Activated CD8-positive, alpha-beta T cell treated with anti-CD3 and anti-CD28 coated beads, Interleukin-2, amount 10 ng/mL, durations not matched to agents 7 days and 5 days (primary cell): ENCODE measurements at regions of chr22 and their contacts with region 1.

Region 1: DNA sequence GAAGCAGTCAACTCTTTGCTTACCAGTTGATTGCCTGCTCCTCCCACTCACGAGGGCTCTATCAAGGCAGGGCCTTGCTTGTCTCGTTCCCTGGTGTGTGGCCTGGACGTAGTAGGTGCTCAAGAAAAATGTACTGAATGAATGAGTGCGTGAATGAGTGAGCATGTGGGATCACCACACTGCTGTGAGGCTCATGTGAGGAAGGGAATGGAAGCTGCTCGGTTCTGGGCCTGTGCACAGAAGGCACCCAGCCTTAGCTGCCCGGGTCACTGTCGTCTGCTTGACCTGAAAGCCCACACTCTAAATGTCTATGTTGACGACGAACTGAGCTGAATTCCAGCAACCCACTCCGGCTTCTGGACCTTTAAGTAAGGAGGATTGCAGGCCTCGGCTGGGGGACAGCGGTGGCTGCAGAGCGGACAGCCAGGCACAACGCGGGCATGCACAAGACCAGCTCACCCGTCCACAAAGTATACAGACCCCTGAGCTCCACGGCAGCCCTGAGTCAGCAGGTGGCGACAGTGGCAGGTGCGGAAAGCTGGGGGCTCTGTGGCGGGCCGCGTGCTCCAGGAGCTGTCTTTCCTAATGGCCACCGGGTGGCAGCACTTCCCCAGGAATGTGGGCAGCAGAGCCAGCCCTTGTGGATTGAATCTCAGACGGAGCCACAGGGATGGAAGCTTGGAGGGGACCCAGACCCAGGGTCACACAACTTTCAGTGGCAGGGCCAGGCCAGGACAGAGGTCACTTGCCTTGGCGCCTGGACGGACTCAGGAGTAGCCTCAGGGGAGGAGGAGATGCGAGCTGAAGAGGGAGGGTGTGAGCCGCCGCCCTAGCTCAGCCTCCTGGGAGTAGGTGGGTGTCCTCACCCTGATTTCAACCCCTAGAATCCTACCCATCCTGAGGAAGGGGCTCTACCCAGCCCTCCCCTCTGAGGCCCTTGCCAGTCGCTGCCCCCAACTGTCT is 5.0 kb upstream of the PICK1 start:
- DNase-seq: peak; percentile 87
- ATAC-seq: peak; percentile 80
- H3K4me3 Mint-ChIP-seq: no peak overlapping the region
- H3K27ac Mint-ChIP-seq: no peak overlapping the region
- H3K4me1 Mint-ChIP-seq: peaks cover 18% of the 10 kb centered on the region
- H3K27me3 Mint-ChIP-seq: peaks cover 7% of the 10 kb centered on the region

Region 2: DNA sequence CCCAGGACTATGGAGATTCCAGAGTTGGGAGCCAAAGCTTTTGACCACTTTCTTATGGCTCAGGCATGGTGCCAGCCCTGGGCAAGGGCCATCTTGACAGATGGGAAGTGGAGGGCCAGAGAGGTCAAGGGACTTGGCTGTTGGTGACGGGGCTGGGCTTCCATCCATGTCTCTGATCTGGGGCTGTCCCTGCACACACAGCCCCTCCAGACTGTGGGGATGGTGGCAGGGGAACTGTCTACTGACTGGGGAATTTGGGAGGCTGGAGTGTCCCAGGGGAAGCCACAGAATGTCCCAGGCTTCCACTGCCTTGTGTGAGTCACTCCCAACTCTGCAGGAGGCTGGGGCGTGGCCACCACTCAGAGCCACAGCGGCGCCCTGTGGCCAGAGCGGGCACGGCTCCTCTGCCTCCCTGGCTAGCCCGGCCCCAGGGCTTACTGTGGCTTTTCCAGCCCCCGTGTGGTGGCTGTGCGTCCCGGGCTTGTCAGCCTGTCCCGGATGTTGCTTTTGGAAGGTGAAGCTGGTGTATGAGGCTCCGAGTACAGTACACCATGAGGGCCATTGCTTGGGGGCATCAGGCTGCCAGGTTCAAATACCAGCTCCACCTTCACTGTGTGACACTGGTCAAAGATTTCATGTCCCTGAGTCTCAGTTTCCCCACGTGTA is 118.3 kb before region 1 on chr22:
- CTCF ChIA-PET with region 1: no interaction called
- POLR2A ChIA-PET with region 1: no interaction called
- DNase-seq: peak; percentile 90
- ATAC-seq: peak; percentile 99
- H3K4me3 Mint-ChIP-seq: no peak overlapping the region
- H3K27ac Mint-ChIP-seq: no peak overlapping the region
- H3K4me1 Mint-ChIP-seq: peaks cover 15% of the 10 kb centered on the region
- H3K27me3 Mint-ChIP-seq: no peaks in the 10 kb centered on the region

Region 3: GRCh38 chr22:38069372-38070249 is 17.4 kb after region 1 on chr22:
- CTCF ChIA-PET with region 1: interaction called, 16 read pairs
- POLR2A ChIA-PET with region 1: interaction called, 4 read pairs
- DNase-seq: no peak
- ATAC-seq: no peak
- H3K4me3 Mint-ChIP-seq: no peak overlapping the region
- H3K27ac Mint-ChIP-seq: no peak overlapping the region
- H3K4me1 Mint-ChIP-seq: no peaks in the 10 kb centered on the region
- H3K27me3 Mint-ChIP-seq: no peaks in the 10 kb centered on the region

Region 4: GRCh38 chr22:38126928-38127668 is 74.9 kb after region 1 on chr22:
- CTCF ChIA-PET with region 1: no interaction called
- POLR2A ChIA-PET with region 1: no interaction called
- DNase-seq: no peak
- ATAC-seq: no peak
- H3K4me3 Mint-ChIP-seq: no peak overlapping the region
- H3K27ac Mint-ChIP-seq: no peak overlapping the region
- H3K4me1 Mint-ChIP-seq: peaks cover 15% of the 10 kb centered on the region
- H3K27me3 Mint-ChIP-seq: no peaks in the 10 kb centered on the region

Region 5: DNA sequence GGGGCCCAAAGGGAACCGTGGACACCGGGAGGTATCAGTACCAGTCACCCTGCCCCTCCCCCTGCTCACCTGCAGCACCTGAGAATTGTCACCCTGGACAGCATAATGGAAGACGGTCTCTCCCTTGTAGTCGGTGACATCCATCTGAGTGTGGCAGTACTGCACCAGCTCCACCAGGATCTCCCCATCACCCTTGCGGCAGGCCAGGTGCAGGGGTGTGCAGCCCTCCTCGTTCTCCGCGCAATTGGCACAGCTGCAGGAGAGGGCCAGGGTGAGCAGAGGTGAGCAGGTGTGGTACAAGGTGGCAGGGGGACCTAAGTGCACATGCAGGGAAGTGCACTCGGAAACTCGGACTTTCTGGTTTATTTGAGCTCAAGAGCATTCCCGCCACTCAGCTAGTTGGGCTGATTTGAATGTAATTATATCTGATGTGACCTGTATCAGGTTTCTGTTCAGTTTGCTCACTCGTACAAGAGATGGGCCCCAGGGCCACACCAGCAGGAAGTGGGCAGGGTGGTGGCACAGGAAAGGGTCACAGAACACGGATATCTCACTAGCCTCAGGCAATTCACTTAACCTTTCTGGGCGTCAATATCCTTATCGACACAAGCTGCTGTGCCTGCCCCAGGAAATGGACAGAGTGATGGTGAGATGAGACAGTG is 91.0 kb after region 1 on chr22:
- CTCF ChIA-PET with region 1: interaction called, 12 read pairs
- POLR2A ChIA-PET with region 1: no interaction called
- DNase-seq: peak; percentile 71
- ATAC-seq: peak; percentile 66
- H3K4me3 Mint-ChIP-seq: peak overlapping the region; percentile 51
- H3K27ac Mint-ChIP-seq: peak overlapping the region; percentile 95
- H3K4me1 Mint-ChIP-seq: peaks cover 36% of the 10 kb centered on the region
- H3K27me3 Mint-ChIP-seq: no peaks in the 10 kb centered on the region

Region 6: DNA sequence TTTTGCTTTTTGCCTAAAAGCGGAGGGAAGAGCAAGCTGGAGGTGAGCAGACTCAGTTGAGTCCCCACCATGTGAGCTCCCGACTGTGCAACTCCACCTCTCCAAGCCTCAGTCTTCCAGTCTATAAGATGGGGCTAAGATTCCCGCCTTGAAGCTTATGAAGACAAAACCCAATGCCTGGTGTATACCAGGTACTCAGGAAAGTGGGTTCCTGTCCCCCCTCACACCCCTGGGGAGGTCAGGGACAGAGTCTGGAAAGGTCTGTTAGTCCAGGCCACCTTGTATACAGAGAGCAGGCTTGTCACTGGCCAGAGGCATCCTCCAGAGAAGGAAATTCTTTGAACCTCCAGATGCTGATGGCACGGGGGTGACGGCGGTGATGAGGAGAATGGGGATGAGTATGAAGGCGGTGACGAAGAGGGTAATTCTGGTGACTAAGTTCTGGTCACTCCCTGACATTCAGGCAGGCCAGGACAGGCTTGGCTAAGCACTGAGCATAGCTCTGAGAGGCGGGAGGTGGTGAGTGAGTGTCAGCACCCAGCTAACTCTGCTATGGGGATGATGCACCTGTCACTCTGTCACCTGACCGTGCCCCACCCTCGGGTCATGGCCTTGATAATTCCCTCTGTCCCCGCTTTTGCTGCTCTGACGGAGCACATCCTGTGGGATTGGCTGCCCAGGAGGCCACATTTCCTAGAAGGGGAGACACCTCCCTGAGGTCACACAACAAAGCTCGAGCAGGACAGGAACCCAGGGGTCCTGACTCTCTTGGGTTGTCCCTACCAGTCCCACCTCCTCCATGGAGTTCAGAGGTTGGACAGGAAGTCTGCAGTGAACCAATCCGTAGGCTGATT is 295.9 kb after region 1 on chr22:
- CTCF ChIA-PET with region 1: interaction called, 24 read pairs
- POLR2A ChIA-PET with region 1: no interaction called
- DNase-seq: peak; percentile 15
- ATAC-seq: no peak
- H3K4me3 Mint-ChIP-seq: no peak overlapping the region
- H3K27ac Mint-ChIP-seq: no peak overlapping the region
- H3K4me1 Mint-ChIP-seq: no peaks in the 10 kb centered on the region
- H3K27me3 Mint-ChIP-seq: no peaks in the 10 kb centered on the region

Region 7: DNA sequence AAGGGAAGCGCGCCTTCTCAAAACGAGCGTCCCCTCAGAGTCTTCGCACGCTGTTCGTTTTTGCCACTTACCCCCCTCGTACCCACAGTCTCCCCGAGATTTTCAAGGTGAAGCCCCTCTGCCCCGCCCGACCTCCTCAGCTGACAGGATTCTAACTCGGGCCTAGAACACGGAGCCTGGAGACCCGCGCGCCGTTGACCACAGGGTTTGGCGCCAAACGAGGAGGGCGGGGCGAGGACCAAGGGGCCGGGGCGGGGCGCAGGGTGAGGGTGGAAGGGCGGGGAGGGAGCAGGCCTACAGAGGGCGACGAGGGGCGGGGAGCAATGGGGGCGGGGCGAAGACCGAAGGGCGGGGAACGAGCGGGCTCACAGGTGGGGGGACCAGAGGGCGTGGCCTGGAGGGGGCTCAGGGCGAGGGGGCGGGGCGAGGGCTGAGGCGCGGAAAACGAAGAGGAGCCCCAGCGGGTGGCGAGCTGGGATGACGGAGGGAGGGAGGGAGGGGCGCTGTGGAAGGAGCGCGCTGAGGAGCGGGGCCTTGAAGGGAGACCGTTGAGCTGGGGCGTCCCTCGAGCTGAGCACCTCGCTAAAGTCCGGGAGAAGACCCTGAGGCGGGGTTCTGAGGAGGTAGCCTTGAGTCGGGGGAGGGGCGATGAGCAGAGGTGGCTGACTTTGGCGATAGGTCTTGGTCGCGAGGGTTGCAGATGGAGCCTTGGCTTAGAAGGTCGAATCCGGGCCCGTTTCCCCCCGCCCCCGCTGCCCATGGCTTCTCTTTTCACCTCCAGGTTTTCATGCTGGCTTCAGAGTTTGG is 518.0 kb after region 1 on chr22 and contains the start of gene DMC1:
- CTCF ChIA-PET with region 1: interaction called, 35 read pairs
- POLR2A ChIA-PET with region 1: interaction called, 5 read pairs
- DNase-seq: peak; percentile 99
- ATAC-seq: peak; percentile 88
- H3K4me3 Mint-ChIP-seq: peak within 1 kb of the TSS; percentile 85
- H3K27ac Mint-ChIP-seq: peak within 1 kb of the TSS; percentile 98
- H3K4me1 Mint-ChIP-seq: peaks cover 22% of the 10 kb centered on the region
- H3K27me3 Mint-ChIP-seq: no peaks in the 10 kb centered on the region
- total RNA-seq, gene DMC1: 10.1 to 12.1 TPM